Activated CD4-positive, alpha-beta T cell treated with anti-CD3 and anti-CD28 coated beads for 36 hours (primary cell): ENCODE measurements at regions of chr10 and their contacts with region 1.

Region 1: GRCh38 chr10:96919785-96920430 is 87.8 kb downstream of the LCOR start:
- DNase-seq: no peak
- ATAC-seq: no peak
- H3K4me3 Mint-ChIP-seq: no peak overlapping the region
- H3K27ac Mint-ChIP-seq: no peak overlapping the region
- H3K4me1 Mint-ChIP-seq: peaks cover 35% of the 10 kb centered on the region
- H3K27me3 Mint-ChIP-seq: no peaks in the 10 kb centered on the region

Region 2: GRCh38 chr10:96548589-96548988 is 371.3 kb before region 1 on chr10:
- CTCF ChIA-PET with region 1: no interaction called
- POLR2A ChIA-PET with region 1: interaction called, 11 read pairs
- intact Hi-C with region 1: no loop called
- DNase-seq: no peak
- ATAC-seq: no peak
- H3K4me3 Mint-ChIP-seq: no peak overlapping the region
- H3K27ac Mint-ChIP-seq: no peak overlapping the region
- H3K4me1 Mint-ChIP-seq: no peaks in the 10 kb centered on the region
- H3K27me3 Mint-ChIP-seq: no peaks in the 10 kb centered on the region

Region 3: DNA sequence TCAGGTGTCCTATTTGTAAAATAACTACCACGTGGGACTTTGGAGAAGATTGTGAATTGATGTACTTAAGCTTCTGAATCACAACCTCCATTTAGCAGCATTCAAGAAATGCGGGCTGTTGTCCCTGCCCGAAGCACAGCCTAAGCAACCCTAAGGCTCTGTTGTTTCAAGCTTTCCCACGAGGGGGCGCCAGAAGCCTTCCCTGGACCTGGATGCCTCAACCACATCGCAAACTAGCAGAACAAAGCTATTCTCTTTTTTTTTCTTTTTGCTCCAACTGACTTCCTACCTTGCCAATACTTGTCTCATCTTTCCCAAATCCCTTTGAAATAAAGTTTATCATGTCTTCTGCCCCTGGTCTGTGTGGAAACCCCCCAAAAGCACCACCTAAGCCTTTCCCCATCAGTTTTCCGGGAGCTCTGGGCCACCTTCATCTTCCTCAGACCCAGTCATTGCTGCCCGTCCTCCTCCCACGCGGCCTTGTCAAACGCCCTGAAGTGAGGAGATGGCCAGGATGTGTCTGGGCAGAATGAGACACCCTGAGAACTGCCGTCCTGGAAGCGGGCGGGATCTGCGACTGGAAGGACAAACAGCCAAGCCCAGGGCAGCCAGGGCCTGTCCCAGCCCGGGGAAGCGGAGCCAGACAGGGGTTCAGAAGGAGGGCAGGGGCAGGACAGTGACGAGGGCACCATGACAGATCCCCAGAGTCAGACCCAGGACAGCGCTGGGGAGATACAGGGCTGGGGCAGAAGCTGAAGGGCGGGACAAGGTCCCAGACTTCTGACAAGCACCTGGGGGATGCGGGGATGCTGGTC is 153.2 kb after region 1 on chr10:
- CTCF ChIA-PET with region 1: no interaction called
- POLR2A ChIA-PET with region 1: no interaction called
- intact Hi-C with region 1: no loop called
- DNase-seq: peak; percentile 92
- ATAC-seq: peak; percentile 75
- H3K4me3 Mint-ChIP-seq: no peak overlapping the region
- H3K27ac Mint-ChIP-seq: no peak overlapping the region
- H3K4me1 Mint-ChIP-seq: peaks cover 11% of the 10 kb centered on the region
- H3K27me3 Mint-ChIP-seq: peaks cover 18% of the 10 kb centered on the region